ENCODE measurements at regions of chr6 and their contacts with region 1.

Region 1: DNA sequence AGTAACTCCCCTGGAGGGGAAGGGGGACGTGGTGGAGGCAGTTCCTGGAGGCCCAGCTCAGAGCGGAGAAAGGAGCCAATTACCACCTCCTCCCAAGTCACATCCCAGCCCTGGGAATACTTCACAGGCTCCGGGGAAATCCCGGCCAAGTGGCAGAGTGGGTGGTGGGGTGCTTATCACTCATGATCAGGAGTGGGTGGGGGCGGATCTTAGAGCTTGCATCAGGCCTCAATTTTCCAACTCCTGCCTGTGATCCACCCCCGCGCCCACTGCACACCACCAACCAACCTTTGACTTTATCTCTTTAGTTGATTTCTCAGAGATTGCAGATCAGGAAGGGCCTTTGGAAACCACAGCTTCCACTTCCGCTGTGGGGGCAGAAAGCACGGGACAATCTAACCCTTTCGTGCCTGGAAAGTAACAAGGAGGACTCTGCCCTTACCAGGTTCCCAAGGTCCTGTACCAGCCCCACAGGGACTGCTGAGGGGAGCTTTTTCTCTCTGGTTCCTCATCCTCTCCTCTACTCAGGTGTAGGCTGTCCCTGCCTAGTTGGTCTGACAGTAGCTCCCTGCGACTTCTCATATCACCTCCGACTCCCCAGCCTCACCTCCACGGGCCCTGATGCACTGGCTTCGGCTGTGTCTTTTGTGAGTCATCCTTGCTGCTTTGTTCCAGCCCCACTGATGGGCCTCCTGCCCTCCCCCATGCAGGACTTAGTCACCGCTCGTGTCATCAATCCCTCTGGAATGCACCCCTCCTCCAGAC is 24.9 kb upstream of the IER3 start:
- DNase-seq: peak; percentile 40

Region 2: DNA sequence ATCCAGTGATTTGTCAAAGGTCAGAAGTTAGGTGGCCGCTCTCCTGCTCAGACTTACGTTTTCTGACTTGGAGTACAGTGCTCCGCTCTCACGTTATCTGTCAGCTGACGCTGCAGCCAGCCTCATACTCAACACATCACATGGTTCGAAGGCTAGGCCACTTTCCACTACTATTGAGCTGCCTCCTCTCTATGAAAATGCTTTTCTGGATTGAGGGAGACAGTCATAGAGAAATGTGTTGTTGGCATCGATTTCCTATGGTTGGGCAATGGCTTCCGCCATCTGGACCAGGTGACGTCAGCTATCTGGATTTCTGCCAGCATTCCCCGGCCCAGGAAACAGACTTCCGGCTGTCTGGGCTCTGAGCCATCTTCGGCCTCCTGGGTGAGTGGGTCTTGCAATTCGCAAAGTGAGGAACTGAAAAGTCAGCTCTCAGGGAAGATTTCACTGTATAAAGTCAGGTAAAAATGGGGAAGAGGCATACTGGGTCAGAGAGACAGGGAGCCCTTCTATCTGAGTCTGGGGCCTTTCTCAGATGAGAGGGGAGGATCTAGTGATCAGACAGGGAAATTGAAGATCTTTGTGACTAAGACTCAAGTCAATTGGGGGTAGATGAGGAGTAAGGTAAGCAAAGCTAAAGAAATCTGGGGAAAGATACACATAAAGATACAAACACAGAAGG is 12.6 kb after region 1 on chr6:
- CTCF ChIA-PET with region 1: interaction called, 4 read pairs
- POLR2A ChIA-PET with region 1: interaction called, 12 read pairs
- DNase-seq: peak; percentile 63